Posterior cingulate gyrus (tissue), 11 donors: ENCODE measurements at regions of chr11 and their contacts with region 1.

Region 1: DNA sequence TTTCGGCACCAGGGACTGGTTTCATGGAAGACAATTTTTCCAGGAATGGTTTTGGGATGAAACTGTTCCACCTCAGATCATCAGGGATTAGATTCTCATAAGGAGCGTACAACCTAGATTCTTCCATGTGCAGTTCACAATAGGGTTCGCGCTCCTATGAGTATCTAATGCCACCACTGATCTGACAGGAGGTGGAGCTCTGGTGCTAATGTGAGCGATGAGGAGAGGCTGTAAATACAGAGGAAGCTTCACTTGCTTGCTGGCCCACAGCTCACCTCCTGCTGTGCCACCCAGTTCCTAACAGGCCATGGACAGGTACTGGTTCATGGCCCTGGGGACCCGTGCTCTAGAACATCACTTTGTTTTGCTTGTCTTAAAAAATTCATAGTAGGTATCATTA is 41.8 kb upstream of the AMPD3 start:
- DNase-seq: peak in 6 of 10 donors; percentile 40 to 90 (median 57)

Region 2: GRCh38 chr11:10358696-10359095 is 54.6 kb before region 1 on chr11:
- intact Hi-C with region 1: no loop called
- DNase-seq: no peak

Region 3: DNA sequence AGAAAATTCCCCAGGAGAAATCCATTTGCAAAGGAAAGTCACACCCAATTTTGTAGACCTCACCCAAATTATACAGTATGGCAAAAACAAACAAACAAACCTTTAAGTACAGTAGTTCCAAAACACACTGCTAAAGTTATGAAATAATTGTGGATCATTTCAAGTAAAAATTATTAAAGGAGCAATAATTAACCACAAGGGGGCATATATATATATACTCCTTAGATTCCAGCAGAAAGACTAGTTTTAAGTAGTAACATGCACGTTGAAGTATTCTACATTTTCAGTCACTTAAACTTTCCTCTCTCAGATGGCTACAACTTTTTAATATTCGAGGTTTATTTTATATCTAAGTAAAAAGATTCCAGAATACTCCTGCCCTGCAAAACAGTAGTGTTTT is 100.9 kb after region 1 on chr11:
- intact Hi-C with region 1: loop called (anchors 10 kb)
- DNase-seq: no peak

Region 4: DNA sequence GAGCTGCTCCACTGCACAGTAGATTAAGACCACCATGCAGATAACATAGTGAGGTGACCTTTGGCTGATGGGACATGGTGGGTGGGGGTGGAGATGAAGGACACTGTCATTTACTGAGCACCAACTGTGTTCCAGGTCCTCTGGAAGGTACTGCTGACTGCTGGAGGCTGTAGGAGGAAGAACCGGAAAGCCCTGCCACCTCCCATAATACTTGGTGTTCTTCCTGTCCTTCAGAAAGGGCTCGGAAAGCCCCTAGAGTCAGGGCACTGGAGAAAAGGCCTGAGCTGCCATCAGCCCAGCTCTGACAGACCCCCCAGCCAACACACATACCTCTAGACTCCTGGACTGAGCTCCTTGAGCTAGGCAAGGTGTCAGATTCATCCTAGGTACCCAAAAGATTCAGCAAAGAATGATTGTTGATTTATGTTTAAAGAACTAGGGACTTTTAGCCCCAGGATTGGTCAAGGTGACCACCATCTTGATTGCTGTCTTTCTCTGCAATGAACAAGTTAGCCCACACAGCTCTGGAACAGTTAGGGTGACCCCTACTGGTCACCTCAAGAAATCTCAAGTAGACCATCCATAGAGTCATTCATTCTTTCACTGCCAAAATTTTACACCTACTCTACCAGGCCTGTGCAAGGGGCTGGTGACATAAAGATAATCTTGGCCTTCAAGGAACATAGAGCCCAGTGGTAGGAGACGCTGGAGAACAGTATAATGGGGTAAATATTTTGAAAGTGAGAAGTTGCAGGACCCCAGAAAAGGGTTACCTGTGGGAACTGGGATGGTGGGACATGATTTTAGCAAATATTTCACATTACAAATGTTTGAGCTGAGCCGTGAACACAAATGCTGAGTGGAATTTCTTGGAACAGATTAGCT is 240.9 kb after region 1 on chr11:
- intact Hi-C with region 1: loop called (anchors 5 kb)
- DNase-seq: peak in 1 of 10 donors; percentile 55